ENCODE measurements at regions of chr13 and their contacts with region 1.

Region 1: DNA sequence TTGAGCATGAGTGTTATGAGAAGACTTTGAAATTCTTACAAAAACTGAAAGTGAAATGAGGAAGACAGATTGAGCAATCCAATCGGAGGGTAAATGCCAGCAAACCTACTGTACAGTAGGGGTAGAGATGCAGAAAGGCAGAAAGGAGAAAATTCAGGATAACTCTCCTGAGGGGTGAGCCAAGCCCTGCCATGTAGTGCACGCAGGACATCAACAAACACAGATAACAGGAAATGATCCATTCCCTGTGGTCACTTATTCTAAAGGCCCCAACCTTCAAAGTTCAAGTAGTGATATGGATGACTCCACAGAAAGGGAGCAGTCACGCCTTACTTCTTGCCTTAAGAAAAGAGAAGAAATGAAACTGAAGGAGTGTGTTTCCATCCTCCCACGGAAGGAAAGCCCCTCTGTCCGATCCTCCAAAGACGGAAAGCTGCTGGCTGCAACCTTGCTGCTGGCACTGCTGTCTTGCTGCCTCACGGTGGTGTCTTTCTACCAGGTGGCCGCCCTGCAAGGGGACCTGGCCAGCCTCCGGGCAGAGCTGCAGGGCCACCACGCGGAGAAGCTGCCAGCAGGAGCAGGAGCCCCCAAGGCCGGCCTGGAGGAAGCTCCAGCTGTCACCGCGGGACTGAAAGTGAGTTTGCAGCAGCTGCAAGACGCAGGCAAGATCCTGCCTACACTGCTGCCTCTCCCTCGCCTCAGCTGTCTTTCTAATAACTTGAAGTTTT is at the start of gene TNFSF13B:
- DNase-seq: peak; percentile 72
- H3K4me3 Mint-ChIP-seq: peak within 1 kb of the TSS; percentile 78
- H3K27ac Mint-ChIP-seq: peak within 1 kb of the TSS; percentile 85
- H3K4me1 Mint-ChIP-seq: peaks cover 50% of the 10 kb centered on the region
- H3K27me3 Mint-ChIP-seq: no peaks in the 10 kb centered on the region
- total RNA-seq, gene TNFSF13B: 3.1 to 4.3 TPM

Region 2: GRCh38 chr13:108166078-108166477 is 103.7 kb before region 1 on chr13:
- CTCF ChIA-PET with region 1: no interaction called
- POLR2A ChIA-PET with region 1: no interaction called
- intact Hi-C with region 1: no loop called
- DNase-seq: no peak
- H3K4me3 Mint-ChIP-seq: no peak overlapping the region
- H3K27ac Mint-ChIP-seq: no peak overlapping the region
- H3K4me1 Mint-ChIP-seq: no peaks in the 10 kb centered on the region
- H3K27me3 Mint-ChIP-seq: peaks cover 2% of the 10 kb centered on the region

Region 3: GRCh38 chr13:108227651-108228272 is 42.0 kb before region 1 on chr13:
- CTCF ChIA-PET with region 1: interaction called, 4 read pairs
- POLR2A ChIA-PET with region 1: interaction called, 3 read pairs
- intact Hi-C with region 1: loop called (anchors 2 kb)
- DNase-seq: no peak
- H3K4me3 Mint-ChIP-seq: no peak overlapping the region
- H3K27ac Mint-ChIP-seq: no peak overlapping the region
- H3K4me1 Mint-ChIP-seq: peaks cover 51% of the 10 kb centered on the region
- H3K27me3 Mint-ChIP-seq: no peaks in the 10 kb centered on the region

Region 4: DNA sequence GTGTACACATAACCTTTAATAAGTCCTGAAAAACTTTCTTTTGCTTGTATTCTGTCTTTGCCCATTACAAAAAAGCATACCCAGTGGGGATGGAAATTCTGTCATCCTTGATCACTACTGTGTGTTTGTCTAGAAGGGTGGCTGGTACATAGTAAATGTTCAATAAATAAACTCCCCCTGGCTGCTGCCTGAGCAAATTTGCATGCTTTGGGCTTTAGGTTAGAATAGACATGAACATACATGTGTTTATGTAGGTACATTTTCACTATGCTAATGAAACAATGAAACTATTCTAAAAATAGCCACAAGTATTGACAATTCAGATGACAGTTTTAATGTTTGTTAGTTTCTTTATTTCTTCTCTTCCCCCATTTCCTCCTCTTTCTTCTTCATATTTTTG is 35.9 kb after region 1 on chr13:
- CTCF ChIA-PET with region 1: no interaction called
- POLR2A ChIA-PET with region 1: no interaction called
- intact Hi-C with region 1: loop called (anchors 2 kb)
- DNase-seq: no peak
- H3K4me3 Mint-ChIP-seq: no peak overlapping the region
- H3K27ac Mint-ChIP-seq: no peak overlapping the region
- H3K4me1 Mint-ChIP-seq: peaks cover 18% of the 10 kb centered on the region
- H3K27me3 Mint-ChIP-seq: no peaks in the 10 kb centered on the region

Region 5: DNA sequence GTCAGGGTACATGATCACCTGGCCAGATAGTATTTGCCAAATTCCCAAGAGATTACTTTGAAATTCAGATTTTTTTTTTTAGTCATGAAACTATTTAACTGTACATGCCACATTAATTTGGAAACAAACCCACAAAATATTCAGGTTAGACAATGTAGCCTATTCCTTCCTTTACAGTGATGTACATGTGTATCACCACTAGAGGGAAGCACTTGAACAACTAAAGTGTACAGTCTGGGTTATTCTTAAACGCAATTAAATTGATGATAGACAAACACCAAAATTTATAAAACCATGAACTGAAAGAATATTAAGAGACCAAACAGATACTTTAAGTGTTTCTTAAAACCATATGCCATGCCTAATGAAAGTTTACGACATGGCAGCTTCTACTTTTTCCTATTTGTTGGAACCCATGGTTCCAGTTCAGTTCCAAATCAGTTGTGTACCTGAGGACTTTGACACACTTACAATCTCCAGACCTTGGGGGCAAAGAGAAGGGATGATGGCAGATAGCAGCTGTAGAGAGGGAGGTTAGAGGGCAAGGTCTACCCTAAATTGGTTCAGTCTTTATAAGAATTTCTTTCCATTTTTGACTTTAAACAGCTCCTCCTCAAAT is 52.5 kb after region 1 on chr13:
- CTCF ChIA-PET with region 1: interaction called, 9 read pairs
- POLR2A ChIA-PET with region 1: no interaction called
- intact Hi-C with region 1: loop called (anchors 5 kb)
- DNase-seq: no peak
- H3K4me3 Mint-ChIP-seq: no peak overlapping the region
- H3K27ac Mint-ChIP-seq: no peak overlapping the region
- H3K4me1 Mint-ChIP-seq: peaks cover 36% of the 10 kb centered on the region
- H3K27me3 Mint-ChIP-seq: no peaks in the 10 kb centered on the region

Region 6: GRCh38 chr13:108595436-108596274 is 325.9 kb after region 1 on chr13:
- CTCF ChIA-PET with region 1: no interaction called
- POLR2A ChIA-PET with region 1: no interaction called
- intact Hi-C with region 1: loop called (anchors 10 kb)
- DNase-seq: peak; percentile 82
- H3K4me3 Mint-ChIP-seq: no peak overlapping the region
- H3K27ac Mint-ChIP-seq: no peak overlapping the region
- H3K4me1 Mint-ChIP-seq: peaks cover 16% of the 10 kb centered on the region
- H3K27me3 Mint-ChIP-seq: peaks cover 10% of the 10 kb centered on the region